Thyroid gland (tissue), 4 donors: ENCODE measurements at regions of chr21 and their contacts with region 1.

Region 1: GRCh38 chr21:17387030-17387617 is 125.7 kb upstream of the CXADR start:
- DNase-seq: peak; percentile 33 to 58
- H3K4me3 ChIP-seq: no peak overlapping the region
- H3K27ac ChIP-seq: no peak overlapping the region
- H3K4me1 ChIP-seq: no peaks in the 10 kb centered on the region
- H3K27me3 ChIP-seq: no peaks in the 10 kb centered on the region
- CTCF ChIP-seq: peak; percentile 57 to 85 (median 76)
- POLR2A ChIP-seq: no peak

Region 2: DNA sequence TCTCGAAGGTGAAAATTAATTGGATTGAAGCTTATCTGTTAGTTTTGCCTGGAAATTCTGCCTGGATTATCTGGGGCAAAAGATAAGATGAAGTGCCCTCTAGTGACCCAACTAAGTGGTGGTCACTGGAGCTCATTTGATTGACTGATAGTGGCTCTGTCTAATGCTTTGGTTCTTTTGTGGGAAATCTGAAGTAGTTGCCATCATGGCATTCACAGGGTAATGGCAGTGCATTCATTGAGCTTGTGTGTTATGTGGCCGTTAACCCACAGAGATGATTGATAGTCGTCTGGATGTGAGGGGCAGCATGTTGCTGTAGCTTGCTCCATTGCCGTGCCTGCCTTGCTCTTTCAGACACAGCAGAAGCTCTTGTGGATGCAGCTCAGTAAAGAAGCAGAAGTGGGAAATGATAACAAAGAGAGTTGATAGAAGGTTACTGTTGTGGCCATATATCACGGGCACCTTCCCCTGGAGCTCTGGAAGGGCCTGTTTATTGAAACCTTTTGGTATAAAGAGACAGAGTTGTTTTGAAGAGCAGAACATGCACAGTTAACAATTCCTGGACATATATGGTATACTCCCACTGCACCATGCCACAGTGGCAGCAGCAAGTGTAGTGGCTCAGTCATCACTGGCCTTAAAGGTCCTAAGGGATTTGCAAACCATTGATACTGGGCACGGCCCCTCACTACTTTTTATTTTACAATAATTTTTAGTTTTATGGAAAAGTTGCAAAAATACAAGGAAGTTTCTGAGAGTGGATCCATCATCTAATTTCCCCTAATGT is 167.7 kb after region 1 on chr21:
- intact Hi-C with region 1: loop called (anchors 10 kb)
- DNase-seq: no peak
- H3K4me3 ChIP-seq: no peak overlapping the region
- H3K27ac ChIP-seq: no peak overlapping the region
- H3K4me1 ChIP-seq: peaks cover 0 to 10% of the 10 kb centered on the region in 2 donors
- H3K27me3 ChIP-seq: no peaks in the 10 kb centered on the region
- CTCF ChIP-seq: peak in 3 of 6 experiments; percentile 36 to 53 (median 39)
- POLR2A ChIP-seq: no peak

Region 3: GRCh38 chr21:17580319-17580718 is 193.2 kb after region 1 on chr21:
- intact Hi-C with region 1: loop called (anchors 5 kb)
- DNase-seq: no peak
- H3K4me3 ChIP-seq: no peak overlapping the region
- H3K27ac ChIP-seq: no peak overlapping the region
- H3K4me1 ChIP-seq: no peaks in the 10 kb centered on the region
- H3K27me3 ChIP-seq: no peaks in the 10 kb centered on the region
- CTCF ChIP-seq: no peak
- POLR2A ChIP-seq: no peak